Activated T-helper 1 cell treated with anti-CD3 and anti-CD28 coated beads, Interleukin-12 subunit alpha, Interleukin-12 subunit beta, Interleukin-2, Interleukin-4 antibody, amounts not matched to agents 30 ng/mL and 10 ng/mL and 1 ng/mL, durations not matched to agents 14 hours and 24 hours and 36 hours (primary cell): ENCODE measurements at regions of chrX and their contacts with region 1.

Region 1: GRCh38 chrX:43958529-43958928 is 14.7 kb downstream of the NDP start:
- DNase-seq: no peak
- H3K4me3 Mint-ChIP-seq: no peak overlapping the region
- H3K27ac Mint-ChIP-seq: no peak overlapping the region
- H3K4me1 Mint-ChIP-seq: peaks cover 6% of the 10 kb centered on the region
- H3K27me3 Mint-ChIP-seq: peaks cover 5% of the 10 kb centered on the region

Region 2: GRCh38 chrX:44025555-44025954 is 67.0 kb after region 1 on chrX:
- intact Hi-C with region 1: loop called (anchors 1 kb)
- DNase-seq: no peak
- H3K4me3 Mint-ChIP-seq: no peak overlapping the region
- H3K27ac Mint-ChIP-seq: no peak overlapping the region
- H3K4me1 Mint-ChIP-seq: no peaks in the 10 kb centered on the region
- H3K27me3 Mint-ChIP-seq: no peaks in the 10 kb centered on the region

Region 3: GRCh38 chrX:44494357-44494756 is 535.8 kb after region 1 on chrX:
- intact Hi-C with region 1: no loop called
- DNase-seq: no peak
- H3K4me3 Mint-ChIP-seq: no peak overlapping the region
- H3K27ac Mint-ChIP-seq: no peak overlapping the region
- H3K4me1 Mint-ChIP-seq: no peaks in the 10 kb centered on the region
- H3K27me3 Mint-ChIP-seq: peaks cover 1% of the 10 kb centered on the region

Region 4: GRCh38 chrX:44542567-44543325 is 584.2 kb after region 1 on chrX and contains the start of gene FUNDC1:
- intact Hi-C with region 1: loop called (anchors 5 kb)
- DNase-seq: peak; percentile 82
- H3K4me3 Mint-ChIP-seq: peak within 1 kb of the TSS; percentile 92
- H3K27ac Mint-ChIP-seq: peak within 1 kb of the TSS; percentile 94
- H3K4me1 Mint-ChIP-seq: peaks cover 10% of the 10 kb centered on the region
- H3K27me3 Mint-ChIP-seq: peaks cover 1% of the 10 kb centered on the region
- total RNA-seq, gene FUNDC1: 11.2 and 12.5 TPM in 2 replicates

Region 5: DNA sequence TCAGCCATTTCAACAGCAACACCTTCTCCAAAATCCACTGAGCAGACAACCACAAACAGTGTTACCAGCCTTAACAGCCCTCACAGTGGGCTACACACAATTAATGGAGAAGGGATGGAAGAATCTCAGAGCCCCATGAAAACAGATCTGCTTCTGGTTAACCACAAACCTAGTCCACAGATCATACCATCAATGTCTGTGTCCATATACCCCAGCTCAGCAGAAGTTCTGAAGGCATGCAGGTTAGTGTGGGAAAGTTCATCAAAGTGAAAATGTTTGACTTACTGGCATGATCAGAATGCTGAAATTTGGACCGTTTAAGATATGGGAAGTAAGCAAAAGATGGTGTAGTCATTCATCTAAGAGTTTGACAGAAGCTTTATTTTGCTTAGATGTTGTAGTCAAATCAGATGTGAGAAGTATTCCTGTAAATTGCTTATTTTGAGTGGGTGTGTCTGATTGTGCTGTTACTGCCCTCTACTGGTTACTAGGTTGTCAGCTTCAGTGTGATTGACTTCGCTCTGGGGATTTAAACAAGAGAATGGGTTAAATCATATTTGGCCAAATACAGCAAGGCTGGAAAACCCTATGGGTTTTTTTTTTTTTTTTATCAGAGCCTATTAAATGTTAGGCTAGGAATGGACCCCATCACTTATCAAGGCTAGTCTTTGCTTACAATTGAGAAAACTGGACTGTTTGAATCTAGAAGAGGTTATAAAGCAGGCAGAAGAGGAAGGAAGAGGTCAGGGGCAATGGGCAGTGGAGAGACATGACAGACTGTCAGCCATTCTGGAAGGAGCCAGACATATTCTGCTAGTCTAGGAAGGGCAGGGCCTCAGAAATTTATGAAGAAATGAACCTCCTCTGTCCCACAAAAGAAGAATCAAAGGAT is 1111.8 kb after region 1 on chrX:
- intact Hi-C with region 1: loop called (anchors 10 kb)
- DNase-seq: no peak
- H3K4me3 Mint-ChIP-seq: no peak overlapping the region
- H3K27ac Mint-ChIP-seq: peak overlapping the region; percentile 63
- H3K4me1 Mint-ChIP-seq: peaks cover 44% of the 10 kb centered on the region
- H3K27me3 Mint-ChIP-seq: no peaks in the 10 kb centered on the region

Region 6: DNA sequence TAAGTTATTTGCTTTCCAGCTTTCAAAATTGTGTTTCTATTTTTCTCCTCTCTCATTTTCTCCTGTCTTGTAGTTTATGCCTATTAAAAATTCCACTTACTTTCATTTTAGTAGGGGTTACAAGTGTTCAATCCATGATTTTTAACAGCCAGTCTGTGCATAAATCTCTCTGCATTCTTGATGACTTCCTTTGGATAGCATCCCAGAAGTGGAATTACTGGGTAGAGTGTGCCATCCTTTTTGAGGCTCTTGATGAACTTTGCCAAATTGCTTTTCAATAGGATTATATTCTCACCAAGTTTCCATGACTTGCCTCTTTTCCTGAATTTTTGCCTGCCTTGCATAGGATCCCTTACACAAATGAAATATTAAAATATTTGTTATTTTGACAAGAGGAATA is 1183.7 kb after region 1 on chrX:
- intact Hi-C with region 1: no loop called
- DNase-seq: no peak
- H3K4me3 Mint-ChIP-seq: no peak overlapping the region
- H3K27ac Mint-ChIP-seq: no peak overlapping the region
- H3K4me1 Mint-ChIP-seq: no peaks in the 10 kb centered on the region
- H3K27me3 Mint-ChIP-seq: no peaks in the 10 kb centered on the region